ENCODE measurements at regions of chr20 and their contacts with region 1.

Region 1: DNA sequence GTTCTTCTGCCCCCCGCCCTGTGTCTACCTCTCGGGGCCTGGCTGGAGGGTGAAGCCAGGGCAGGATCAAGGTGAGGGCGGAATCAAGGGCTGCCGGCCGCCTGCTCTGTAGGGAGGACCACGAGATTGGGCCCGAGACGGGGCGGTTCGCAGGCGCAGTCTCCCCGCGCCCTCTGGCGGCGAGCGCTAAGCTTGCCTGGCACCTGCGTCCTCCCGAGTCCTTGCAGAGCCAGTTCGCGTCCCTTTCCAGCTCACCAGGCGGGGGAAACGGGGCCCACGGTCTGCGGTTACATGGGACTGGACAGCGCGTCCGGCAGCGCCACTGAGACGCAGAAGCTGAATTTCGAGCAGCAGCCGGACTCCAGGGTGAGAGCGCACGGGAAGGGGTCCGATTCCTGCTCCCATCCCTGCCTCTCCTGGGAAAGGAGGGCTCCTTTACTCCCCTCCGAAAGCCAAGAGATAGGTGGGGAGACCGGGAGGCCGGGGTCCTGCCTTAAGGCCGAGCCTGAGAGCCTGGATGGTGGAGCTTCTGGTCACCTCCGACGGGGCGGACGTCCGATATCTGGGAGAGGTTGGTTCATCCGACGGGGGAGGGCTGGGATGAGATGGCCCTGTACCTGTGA is 3.6 kb upstream of the MATN4 start:
- DNase-seq: peak; percentile 75
- H3K4me3 ChIP-seq: no peak overlapping the region
- H3K27ac ChIP-seq: no peak overlapping the region
- H3K4me1 ChIP-seq: no peaks in the 10 kb centered on the region
- H3K27me3 ChIP-seq: peaks cover 8% of the 10 kb centered on the region; the same call in 1 of the 2 replicates
- CTCF ChIP-seq: peak; percentile 48
- EP300 ChIP-seq: no peak
- RAD21 ChIP-seq: peak; percentile 37

Region 2: DNA sequence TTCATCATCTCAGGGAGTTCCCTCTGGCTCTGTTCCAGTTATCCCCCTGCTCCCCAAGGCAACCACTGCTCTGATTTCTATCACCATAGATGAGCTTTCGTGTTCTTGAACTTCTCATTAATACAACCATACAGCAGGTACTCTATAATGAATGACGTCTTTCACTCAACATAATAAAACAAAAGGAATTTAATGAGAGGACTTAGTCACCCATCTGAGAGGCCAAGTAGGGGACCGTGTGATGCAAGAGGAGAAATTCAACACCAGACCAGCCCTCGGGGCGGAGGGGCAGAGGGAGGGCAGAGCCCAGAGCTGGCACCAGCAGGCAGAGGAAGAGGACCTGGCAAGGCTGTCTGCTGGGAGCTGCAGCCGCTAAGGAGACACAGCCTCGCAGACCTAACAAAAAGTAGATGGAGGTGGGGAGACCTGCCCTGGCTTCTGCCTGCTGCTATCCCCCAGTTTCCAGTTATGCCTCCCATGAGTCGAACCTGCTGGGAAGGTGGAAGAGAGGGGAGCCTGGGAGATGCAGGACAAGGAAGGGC is 582.8 kb before region 1 on chr20:
- CTCF ChIA-PET with region 1: no interaction called
- POLR2A ChIA-PET with region 1: no interaction called
- DNase-seq: peak; percentile 88
- H3K4me3 ChIP-seq: peak overlapping the region; percentile 0 to 22; a peak in 1 of 4 replicates
- H3K27ac ChIP-seq: peak overlapping the region; percentile 45 to 67
- H3K4me1 ChIP-seq: peaks cover 19 to 21% of the 10 kb centered on the region in 2 experiments
- H3K27me3 ChIP-seq: no peaks in the 10 kb centered on the region
- CTCF ChIP-seq: no peak
- EP300 ChIP-seq: peak; percentile 59 to 77; a peak in 3 of 4 replicates
- RAD21 ChIP-seq: no peak

Region 3: DNA sequence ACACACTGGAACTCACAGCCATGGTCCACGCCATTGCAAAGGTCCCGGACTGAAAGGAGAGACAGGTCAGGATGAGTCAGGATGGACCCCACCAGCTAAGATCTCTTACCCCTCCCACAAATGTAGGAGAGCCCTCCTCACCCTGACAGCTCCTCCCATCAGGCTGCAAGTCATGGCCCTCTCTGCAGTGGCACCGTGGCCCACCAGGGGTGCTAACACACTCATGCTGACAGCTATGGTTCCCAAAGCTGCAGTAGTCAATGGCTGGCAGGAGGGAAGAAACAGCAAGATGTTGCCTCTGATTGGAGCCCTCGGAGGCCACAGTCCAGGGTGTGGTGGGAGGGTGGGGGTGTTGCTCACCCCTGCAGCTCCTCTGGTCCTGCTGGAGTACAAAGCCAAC is 10.7 kb before region 1 on chr20:
- CTCF ChIA-PET with region 1: interaction called, 13 read pairs
- POLR2A ChIA-PET with region 1: no interaction called
- DNase-seq: peak; percentile 79
- H3K4me3 ChIP-seq: no peak overlapping the region
- H3K27ac ChIP-seq: no peak overlapping the region
- H3K4me1 ChIP-seq: no peaks in the 10 kb centered on the region; a peak in 2 of 4 replicates
- H3K27me3 ChIP-seq: no peaks in the 10 kb centered on the region; the same call in 1 of the 2 replicates
- CTCF ChIP-seq: peak; percentile 52
- EP300 ChIP-seq: no peak
- RAD21 ChIP-seq: no peak

Measured in SK-N-SH (cell line).